HEK293T (cell line): ENCODE measurements at regions of chr12 and their contacts with region 1.

Region 1: GRCh38 chr12:49130151-49131050 is 794 bp downstream of the TUBA1B start:
- DNase-seq: peak; percentile 85

Region 2: GRCh38 chr12:49041881-49042484 is 88.4 kb before region 1 on chr12:
- CTCF ChIA-PET with region 1: no interaction called
- POLR2A ChIA-PET with region 1: no interaction called
- DNase-seq: no peak

Region 3: DNA sequence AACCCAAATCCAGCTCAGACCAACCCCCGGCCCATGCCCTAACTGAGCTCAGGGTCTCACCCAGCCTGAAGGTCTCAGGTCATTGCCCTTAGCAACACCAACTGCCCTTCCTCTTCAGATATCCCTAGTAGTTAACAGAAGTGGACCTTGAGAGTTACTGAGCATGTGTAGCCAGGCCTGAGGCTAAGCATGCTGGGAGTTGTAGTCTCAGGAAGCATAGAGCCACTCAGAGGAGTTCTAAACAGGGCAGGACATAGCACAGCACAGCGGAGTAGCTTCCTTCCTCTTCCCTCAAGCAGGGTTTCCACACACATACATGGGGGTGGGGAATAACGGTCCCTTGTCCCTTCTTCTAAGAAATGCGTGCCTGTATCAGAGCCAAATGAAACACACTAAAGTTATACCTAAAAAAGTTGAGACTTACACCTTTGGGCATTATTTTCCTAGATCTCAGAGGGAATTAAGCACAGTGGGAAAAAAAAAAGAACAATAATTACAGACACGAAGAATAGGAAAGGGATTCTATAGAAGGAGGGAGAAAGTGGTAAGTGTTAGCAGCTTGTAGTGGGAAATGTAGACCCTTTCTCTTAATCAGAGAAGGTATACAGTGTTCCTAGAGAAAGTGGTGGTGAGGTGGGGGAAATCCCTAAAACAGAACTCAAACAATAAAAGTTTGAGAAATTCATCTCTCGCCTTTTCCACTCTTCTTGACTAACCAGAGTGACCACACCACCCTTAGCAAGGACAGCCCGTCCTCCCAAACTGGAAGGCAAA is 74.2 kb before region 1 on chr12:
- CTCF ChIA-PET with region 1: interaction called, 3 read pairs
- POLR2A ChIA-PET with region 1: interaction called, 50 read pairs
- DNase-seq: peak; percentile 74

Region 4: GRCh38 chr12:49105608-49106007 is 24.8 kb before region 1 on chr12:
- CTCF ChIA-PET with region 1: interaction called, 3 read pairs
- POLR2A ChIA-PET with region 1: interaction called, 112 read pairs
- DNase-seq: no peak

Region 5: DNA sequence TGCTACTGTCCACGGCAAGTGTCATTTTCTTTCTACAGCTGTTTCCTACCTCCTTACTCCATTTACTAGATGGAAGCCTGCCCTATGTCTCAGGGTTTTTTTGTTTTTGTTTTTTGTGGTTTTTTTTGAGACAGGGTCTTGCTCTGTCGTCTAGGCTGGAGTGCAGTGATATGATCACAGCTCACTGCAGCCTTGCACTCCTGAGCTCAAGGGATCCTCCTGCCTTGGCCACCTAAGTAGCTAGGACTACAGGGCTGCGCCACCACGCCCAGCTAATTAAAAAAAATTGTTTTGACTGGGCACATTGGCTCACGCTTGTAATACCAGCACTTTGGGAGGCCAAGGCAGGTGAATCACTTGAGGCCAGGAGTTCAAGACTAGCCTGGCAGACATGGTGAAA is 43.8 kb after region 1 on chr12:
- CTCF ChIA-PET with region 1: no interaction called
- POLR2A ChIA-PET with region 1: interaction called, 19 read pairs
- DNase-seq: no peak

Region 6: GRCh38 chr12:49225556-49226181 is 95.3 kb after region 1 on chr12:
- CTCF ChIA-PET with region 1: no interaction called
- POLR2A ChIA-PET with region 1: interaction called, 109 read pairs
- DNase-seq: no peak

Region 7: GRCh38 chr12:49279706-49280159 is 149.3 kb after region 1 on chr12:
- CTCF ChIA-PET with region 1: no interaction called
- POLR2A ChIA-PET with region 1: interaction called, 10 read pairs
- DNase-seq: no peak